Mammary epithelial cell (primary cell): ENCODE measurements at regions of chr2 and their contacts with region 1.

Region 1: GRCh38 chr2:216519154-216519762 is 20.6 kb downstream of the RPL37A start:
- DNase-seq: peak; percentile 70
- H3K4me3 ChIP-seq: no peak overlapping the region
- H3K27ac ChIP-seq: no peak overlapping the region
- H3K4me1 ChIP-seq: peaks cover 15% of the 10 kb centered on the region
- H3K27me3 ChIP-seq: no peaks in the 10 kb centered on the region
- CTCF ChIP-seq: peak; percentile 72 to 78

Region 2: DNA sequence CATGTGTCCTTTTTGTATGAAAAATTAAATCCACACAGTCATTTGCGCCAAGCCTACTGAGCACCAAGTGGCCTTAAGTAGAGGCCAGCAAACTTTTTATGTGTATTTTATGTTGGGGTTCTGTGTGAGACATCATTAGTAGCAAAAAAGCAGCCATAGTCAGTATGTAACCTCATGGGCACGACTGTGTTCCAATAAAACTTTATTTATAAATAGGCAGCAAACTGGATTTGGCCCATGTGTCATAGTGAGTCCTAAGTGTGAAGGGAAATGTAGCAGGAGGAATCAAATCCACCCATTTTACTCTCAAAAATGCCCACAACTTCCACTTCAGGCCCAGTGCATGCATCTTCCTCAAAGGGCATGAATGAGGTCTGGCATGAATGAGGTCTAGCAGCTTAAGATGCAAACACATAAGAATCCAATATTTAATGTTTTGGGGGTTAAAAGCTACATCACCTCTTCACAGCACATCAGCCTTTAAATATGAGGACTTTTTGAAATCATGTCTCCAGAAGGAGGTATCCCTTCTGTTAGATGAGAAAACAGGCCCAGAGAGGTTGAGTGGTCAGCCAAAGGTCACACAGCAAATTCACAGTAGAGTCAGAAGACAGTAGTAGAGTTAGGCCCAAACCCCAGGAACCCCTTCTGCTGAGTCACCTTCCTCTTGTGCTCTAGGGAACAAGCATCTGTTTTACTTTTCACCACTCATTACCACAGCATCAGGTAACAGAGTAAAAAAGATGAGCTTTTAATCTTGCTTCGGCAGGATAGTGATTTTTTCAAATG is 551.5 kb before region 1 on chr2:
- CTCF ChIA-PET with region 1: no interaction called
- dilution Hi-C with region 1: no loop called
- in situ Hi-C with region 1: no loop called
- intact Hi-C with region 1: no loop called
- DNase-seq: peak; percentile 28
- H3K4me3 ChIP-seq: no peak overlapping the region
- H3K27ac ChIP-seq: no peak overlapping the region
- H3K4me1 ChIP-seq: peaks cover 4% of the 10 kb centered on the region
- H3K27me3 ChIP-seq: no peaks in the 10 kb centered on the region
- CTCF ChIP-seq: no peak

Region 3: DNA sequence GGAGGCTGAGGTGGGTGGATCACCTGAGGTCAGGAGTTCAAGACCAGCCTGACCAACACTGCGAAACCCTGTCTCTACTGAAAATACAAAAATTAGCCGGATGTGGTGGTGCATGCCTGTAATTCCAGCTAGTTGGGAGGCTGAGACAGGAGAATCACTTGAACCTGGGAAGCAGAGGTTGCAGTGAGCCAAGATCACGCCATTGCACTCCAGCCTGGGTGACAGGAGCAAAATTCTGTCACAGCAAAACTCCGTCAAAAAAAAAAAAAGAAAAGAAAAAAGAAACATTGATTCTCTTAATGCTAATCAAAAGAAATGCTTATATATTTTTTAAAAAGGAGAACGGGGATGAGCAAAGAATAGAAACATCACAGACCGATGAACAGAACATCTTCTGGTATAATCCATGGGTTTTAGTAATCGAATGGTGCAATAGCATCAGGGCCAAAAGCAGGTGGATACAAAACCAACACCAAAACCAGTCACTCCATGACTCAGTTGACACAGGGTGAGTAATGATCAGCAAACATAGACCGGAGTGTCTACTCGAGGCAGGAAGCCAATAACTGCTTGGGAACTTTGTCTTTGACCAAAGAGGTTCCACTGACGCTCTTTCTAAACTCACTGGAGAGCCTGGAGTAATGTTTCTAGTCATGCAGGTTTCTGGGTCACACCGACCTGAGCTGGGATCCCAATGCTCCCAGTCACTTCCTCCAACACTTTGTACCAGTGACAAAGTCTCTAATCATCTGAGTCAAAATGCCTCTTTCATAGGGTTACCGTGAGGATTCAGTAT is 537.0 kb before region 1 on chr2:
- CTCF ChIA-PET with region 1: no interaction called
- dilution Hi-C with region 1: no loop called
- in situ Hi-C with region 1: no loop called
- intact Hi-C with region 1: no loop called
- DNase-seq: peak; percentile 100
- H3K4me3 ChIP-seq: no peak overlapping the region
- H3K27ac ChIP-seq: peak overlapping the region; percentile 80
- H3K4me1 ChIP-seq: peaks cover 21% of the 10 kb centered on the region
- H3K27me3 ChIP-seq: no peaks in the 10 kb centered on the region
- CTCF ChIP-seq: no peak

Region 4: GRCh38 chr2:216222650-216223352 is 296.5 kb before region 1 on chr2:
- CTCF ChIA-PET with region 1: no interaction called
- dilution Hi-C with region 1: no loop called
- in situ Hi-C with region 1: no loop called
- intact Hi-C with region 1: loop called (anchors 2 kb)
- DNase-seq: peak; percentile 41
- H3K4me3 ChIP-seq: no peak overlapping the region
- H3K27ac ChIP-seq: no peak overlapping the region
- H3K4me1 ChIP-seq: peaks cover 28% of the 10 kb centered on the region
- H3K27me3 ChIP-seq: no peaks in the 10 kb centered on the region
- CTCF ChIP-seq: peak; percentile 19 to 48

Region 5: DNA sequence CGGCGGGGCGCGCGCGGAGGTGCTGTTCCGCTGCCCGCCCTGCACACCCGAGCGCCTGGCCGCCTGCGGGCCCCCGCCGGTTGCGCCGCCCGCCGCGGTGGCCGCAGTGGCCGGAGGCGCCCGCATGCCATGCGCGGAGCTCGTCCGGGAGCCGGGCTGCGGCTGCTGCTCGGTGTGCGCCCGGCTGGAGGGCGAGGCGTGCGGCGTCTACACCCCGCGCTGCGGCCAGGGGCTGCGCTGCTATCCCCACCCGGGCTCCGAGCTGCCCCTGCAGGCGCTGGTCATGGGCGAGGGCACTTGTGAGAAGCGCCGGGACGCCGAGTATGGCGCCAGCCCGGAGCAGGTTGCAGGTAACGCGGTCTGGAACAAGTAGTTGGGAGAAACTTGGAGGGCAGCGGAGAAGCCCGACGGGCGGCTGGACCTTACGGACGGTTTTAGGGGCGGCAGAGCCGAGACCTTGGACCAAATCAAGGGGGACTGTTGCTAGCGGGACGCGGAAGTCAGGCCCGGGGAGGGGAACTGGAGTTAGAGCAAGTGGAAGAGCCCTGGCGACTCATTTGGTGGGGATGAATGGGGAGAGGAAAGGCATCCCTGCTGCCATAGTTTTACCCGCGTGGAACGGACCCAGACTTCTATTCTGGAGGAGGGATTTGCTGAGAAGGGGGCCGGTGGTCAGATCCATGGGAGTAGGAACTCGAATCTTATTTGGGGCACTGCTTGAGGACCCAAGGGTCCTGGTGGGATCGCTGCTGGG is 114.5 kb after region 1 on chr2:
- CTCF ChIA-PET with region 1: interaction called, 3 read pairs
- dilution Hi-C with region 1: no loop called
- in situ Hi-C with region 1: no loop called
- intact Hi-C with region 1: loop called (anchors 1 kb)
- DNase-seq: peak; percentile 42
- H3K4me3 ChIP-seq: peak overlapping the region; percentile 71 to 93 (median 77)
- H3K27ac ChIP-seq: peak overlapping the region; percentile 61
- H3K4me1 ChIP-seq: peaks cover 21% of the 10 kb centered on the region
- H3K27me3 ChIP-seq: no peaks in the 10 kb centered on the region
- CTCF ChIP-seq: no peak

Region 6: GRCh38 chr2:216692636-216693413 is 173.6 kb after region 1 on chr2:
- CTCF ChIA-PET with region 1: interaction called, 12 read pairs
- dilution Hi-C with region 1: no loop called
- in situ Hi-C with region 1: no loop called
- intact Hi-C with region 1: no loop called
- DNase-seq: peak; percentile 50
- H3K4me3 ChIP-seq: peak overlapping the region; percentile 37 to 48 (median 40)
- H3K27ac ChIP-seq: no peak overlapping the region
- H3K4me1 ChIP-seq: peaks cover 35% of the 10 kb centered on the region
- H3K27me3 ChIP-seq: peaks cover 4% of the 10 kb centered on the region
- CTCF ChIP-seq: no peak

Region 7: GRCh38 chr2:217142649-217143266 is 623.5 kb after region 1 on chr2:
- CTCF ChIA-PET with region 1: interaction called, 3 read pairs
- dilution Hi-C with region 1: no loop called
- in situ Hi-C with region 1: no loop called
- intact Hi-C with region 1: loop called (anchors 2 kb)
- DNase-seq: peak; percentile 17
- H3K4me3 ChIP-seq: no peak overlapping the region
- H3K27ac ChIP-seq: no peak overlapping the region
- H3K4me1 ChIP-seq: no peaks in the 10 kb centered on the region
- H3K27me3 ChIP-seq: no peaks in the 10 kb centered on the region
- CTCF ChIP-seq: peak; percentile 78 to 81

Region 8: GRCh38 chr2:217756375-217757107 is 1237.3 kb after region 1 on chr2:
- CTCF ChIA-PET with region 1: no interaction called
- dilution Hi-C with region 1: no loop called
- in situ Hi-C with region 1: no loop called
- intact Hi-C with region 1: loop called (anchors 2 kb)
- DNase-seq: no peak
- H3K4me3 ChIP-seq: no peak overlapping the region
- H3K27ac ChIP-seq: no peak overlapping the region
- H3K4me1 ChIP-seq: no peaks in the 10 kb centered on the region
- H3K27me3 ChIP-seq: peaks cover 3% of the 10 kb centered on the region
- CTCF ChIP-seq: peak; percentile 58 to 91